GM12878 (cell line): ENCODE measurements at regions of chr1 and their contacts with region 1.

Region 1: GRCh38 chr1:9101510-9102146 is 27.3 kb downstream of the GPR157 start:
- DNase-seq: no peak
- ATAC-seq: peak; percentile 100
- H3K4me3 ChIP-seq: no peak overlapping the region
- H3K27ac ChIP-seq: no peak overlapping the region
- H3K4me1 ChIP-seq: no peaks in the 10 kb centered on the region
- H3K27me3 ChIP-seq: no peaks in the 10 kb centered on the region
- CTCF ChIP-seq: peak; percentile 78 to 90 (median 83)
- EP300 ChIP-seq: no peak
- POLR2A ChIP-seq: no peak
- RAD21 ChIP-seq: peak; percentile 86

Region 2: GRCh38 chr1:8962812-8963530 is 138.7 kb before region 1 on chr1:
- CTCF ChIA-PET with region 1: interaction called, 31 read pairs
- POLR2A ChIA-PET with region 1: no interaction called
- RAD21 ChIA-PET with region 1: interaction called, 19 read pairs
- SMC1A ChIA-PET with region 1: interaction called, 12 read pairs
- in situ Hi-C with region 1: no loop called
- intact Hi-C with region 1: no loop called
- DNase-seq: no peak
- ATAC-seq: peak; percentile 90
- H3K4me3 ChIP-seq: no peak overlapping the region
- H3K27ac ChIP-seq: no peak overlapping the region
- H3K4me1 ChIP-seq: no peaks in the 10 kb centered on the region; the same call in 1 of the 2 replicates
- H3K27me3 ChIP-seq: no peaks in the 10 kb centered on the region; a peak in 1 of 4 replicates
- CTCF ChIP-seq: peak; percentile 59 to 79 (median 66)
- EP300 ChIP-seq: no peak
- POLR2A ChIP-seq: no peak
- RAD21 ChIP-seq: peak; percentile 44

Region 3: GRCh38 chr1:9014475-9015375 is 86.9 kb before region 1 on chr1:
- CTCF ChIA-PET with region 1: interaction called, 126 read pairs
- POLR2A ChIA-PET with region 1: no interaction called
- RAD21 ChIA-PET with region 1: interaction called, 26 read pairs
- SMC1A ChIA-PET with region 1: interaction called, 30 read pairs
- in situ Hi-C with region 1: loop called (anchors 5 kb)
- intact Hi-C with region 1: loop called (anchors 1 kb)
- DNase-seq: no peak
- ATAC-seq: no peak
- H3K4me3 ChIP-seq: no peak overlapping the region
- H3K27ac ChIP-seq: no peak overlapping the region
- H3K4me1 ChIP-seq: peaks cover 23% of the 10 kb centered on the region
- H3K27me3 ChIP-seq: no peaks in the 10 kb centered on the region
- CTCF ChIP-seq: no peak
- EP300 ChIP-seq: no peak
- POLR2A ChIP-seq: no peak
- RAD21 ChIP-seq: no peak

Region 4: GRCh38 chr1:9048551-9048950 is 53.1 kb before region 1 on chr1:
- CTCF ChIA-PET with region 1: interaction called, 11 read pairs
- POLR2A ChIA-PET with region 1: no interaction called
- RAD21 ChIA-PET with region 1: no interaction called
- SMC1A ChIA-PET with region 1: interaction called, 4 read pairs
- in situ Hi-C with region 1: no loop called
- intact Hi-C with region 1: no loop called
- DNase-seq: no peak
- ATAC-seq: no peak
- H3K4me3 ChIP-seq: no peak overlapping the region
- H3K27ac ChIP-seq: no peak overlapping the region
- H3K4me1 ChIP-seq: no peaks in the 10 kb centered on the region
- H3K27me3 ChIP-seq: no peaks in the 10 kb centered on the region
- CTCF ChIP-seq: no peak
- EP300 ChIP-seq: no peak
- POLR2A ChIP-seq: no peak
- RAD21 ChIP-seq: no peak

Region 5: DNA sequence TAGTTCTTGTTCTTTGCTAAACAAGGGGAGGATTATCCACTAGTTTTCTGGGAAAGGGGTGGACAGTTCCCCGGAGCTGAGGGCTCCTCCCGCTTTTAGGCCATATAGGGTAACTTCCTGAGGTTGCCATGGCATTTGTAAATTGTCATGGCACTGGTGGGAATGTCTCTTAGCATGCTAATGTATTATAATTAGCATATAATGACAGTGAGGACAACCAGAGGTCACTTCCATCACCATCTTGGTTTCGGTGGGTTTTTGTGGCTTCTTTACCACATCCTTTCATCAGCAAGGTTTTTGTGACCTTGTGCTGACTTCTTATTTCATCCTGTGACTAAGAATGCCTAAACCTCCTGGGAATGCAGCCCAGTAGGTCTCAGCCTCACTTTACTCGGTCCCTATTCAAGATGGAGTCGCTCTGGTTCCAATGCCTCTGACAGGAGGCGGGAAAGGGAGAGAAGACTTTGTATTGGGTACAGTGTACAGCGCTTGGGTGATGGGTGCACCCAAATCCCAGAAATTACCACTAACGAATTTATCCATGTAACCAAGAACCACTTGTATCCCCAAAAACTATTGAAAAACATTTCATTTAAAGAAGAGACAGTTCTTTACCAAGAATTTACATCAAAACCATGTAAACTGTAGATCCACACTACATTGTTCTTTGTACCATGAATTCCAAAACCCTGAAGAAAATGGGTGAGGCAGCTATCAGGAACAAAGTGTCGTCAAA is 23.4 kb before region 1 on chr1:
- CTCF ChIA-PET with region 1: interaction called, 26 read pairs
- POLR2A ChIA-PET with region 1: no interaction called
- RAD21 ChIA-PET with region 1: interaction called, 5 read pairs
- SMC1A ChIA-PET with region 1: interaction called, 18 read pairs
- in situ Hi-C with region 1: no loop called
- intact Hi-C with region 1: no loop called
- DNase-seq: peak; percentile 95
- ATAC-seq: peak; percentile 49
- H3K4me3 ChIP-seq: no peak overlapping the region
- H3K27ac ChIP-seq: peak overlapping the region; percentile 45
- H3K4me1 ChIP-seq: peaks cover 55% of the 10 kb centered on the region
- H3K27me3 ChIP-seq: no peaks in the 10 kb centered on the region
- CTCF ChIP-seq: no peak
- EP300 ChIP-seq: peak; percentile 83 to 94; a peak in 3 of 4 replicates
- POLR2A ChIP-seq: no peak
- RAD21 ChIP-seq: no peak